ENCODE measurements at regions of chr3 and their contacts with region 1.

Region 1: GRCh38 chr3:116140100-116140689 is 305.1 kb downstream of the LSAMP start:
- DNase-seq: peak; percentile 12
- ATAC-seq: no peak
- H3K4me3 ChIP-seq: no peak overlapping the region
- H3K27ac ChIP-seq: no peak overlapping the region
- H3K4me1 ChIP-seq: no peaks in the 10 kb centered on the region
- H3K27me3 ChIP-seq: no peaks in the 10 kb centered on the region
- CTCF ChIP-seq: peak; percentile 47 to 93 (median 66); a peak in 5 of 6 replicates
- POLR2A ChIP-seq: no peak
- RAD21 ChIP-seq: peak; percentile 63

Region 2: GRCh38 chr3:116453666-116454346 is 313.6 kb after region 1 on chr3:
- CTCF ChIA-PET with region 1: no interaction called
- POLR2A ChIA-PET with region 1: no interaction called
- RAD21 ChIA-PET with region 1: no interaction called
- intact Hi-C with region 1: loop called (anchors 10 kb)
- DNase-seq: no peak
- ATAC-seq: no peak
- H3K4me3 ChIP-seq: no peak overlapping the region
- H3K27ac ChIP-seq: no peak overlapping the region
- H3K4me1 ChIP-seq: no peaks in the 10 kb centered on the region
- H3K27me3 ChIP-seq: no peaks in the 10 kb centered on the region
- CTCF ChIP-seq: peak; percentile 5 to 33 (median 11); a peak in 2 of 6 replicates
- POLR2A ChIP-seq: no peak
- RAD21 ChIP-seq: peak; percentile 21; the same call in 1 of the 2 replicates